Tibial artery (tissue), 4 donors: ENCODE measurements at regions of chr17 and their contacts with region 1.

Region 1: DNA sequence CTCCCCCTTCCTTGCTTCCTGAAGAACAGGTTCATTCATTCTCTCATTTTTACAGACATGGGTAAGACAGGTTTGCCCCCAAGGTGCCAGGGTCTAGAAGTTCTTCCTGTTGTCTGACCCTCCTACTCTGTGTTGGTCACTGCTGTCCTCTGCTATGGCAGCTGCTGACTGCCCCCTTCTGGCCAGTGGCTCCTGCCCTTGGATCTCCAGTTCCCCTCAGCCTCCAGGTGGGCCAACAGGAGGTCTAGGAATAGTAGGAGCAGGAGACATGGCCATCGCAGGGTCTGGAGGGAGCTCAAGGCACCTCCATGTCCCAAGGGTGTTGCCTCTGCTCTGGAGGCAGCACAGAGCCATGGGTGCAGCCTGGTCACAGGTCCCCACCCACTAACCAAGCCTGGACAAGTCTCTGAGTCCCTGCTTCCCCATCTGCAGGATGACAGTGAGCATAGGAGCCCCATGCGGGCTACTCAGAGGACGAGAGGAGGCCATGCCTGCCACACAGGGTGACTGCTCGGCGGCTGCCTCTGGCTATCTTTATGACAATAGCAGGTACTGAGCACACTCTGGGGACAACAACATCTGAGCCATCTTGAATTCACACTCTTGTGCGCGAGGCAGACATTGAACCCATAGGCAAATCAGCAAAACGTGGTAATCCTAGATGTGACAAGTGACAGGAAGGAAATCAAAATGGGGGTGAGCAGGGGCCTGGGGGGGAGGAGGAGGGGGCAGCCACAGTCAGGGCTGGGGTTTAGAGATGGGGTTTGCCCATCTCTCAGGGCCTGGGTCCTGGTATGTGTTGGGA is 27.0 kb upstream of the NXPH3 start:
- DNase-seq: no peak
- H3K4me3 ChIP-seq: no peak overlapping the region
- H3K27ac ChIP-seq: no peak overlapping the region
- H3K4me1 ChIP-seq: peaks cover 0 to 14% (median 3%) of the 10 kb centered on the region in 4 donors
- H3K27me3 ChIP-seq: peaks cover 0 to 34% of the 10 kb centered on the region in 2 donors
- CTCF ChIP-seq: peak; percentile 35

Region 2: DNA sequence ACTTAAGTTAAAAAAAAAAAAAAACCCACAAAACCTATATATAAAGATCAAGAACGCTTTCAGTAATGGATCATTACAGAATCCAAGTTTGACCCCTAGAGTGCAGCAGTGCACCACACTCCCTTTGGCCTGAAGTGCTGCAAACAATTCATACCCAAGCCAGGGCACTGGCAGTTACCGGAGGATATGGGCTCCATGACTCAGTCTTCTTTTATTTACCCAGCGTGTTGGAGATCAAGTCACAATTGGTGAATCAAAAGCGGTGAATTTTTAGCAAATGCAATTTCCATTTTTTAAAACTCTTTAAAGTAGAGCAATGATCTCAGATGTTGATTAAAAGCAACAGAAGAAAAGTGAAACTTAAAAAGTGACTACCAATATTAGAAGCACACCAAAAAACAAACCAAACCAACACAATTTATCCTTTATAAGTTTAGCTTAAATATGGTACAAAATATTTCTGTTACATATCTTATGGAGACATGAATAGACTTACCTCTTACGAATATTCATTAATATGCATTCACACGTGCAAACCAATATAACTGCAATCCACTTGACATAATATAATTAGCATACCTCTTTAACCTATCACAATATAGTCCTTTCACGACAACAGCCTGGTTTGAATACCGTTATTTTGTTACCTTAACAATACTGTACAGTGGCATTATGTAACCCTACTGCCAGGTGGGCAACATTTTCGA is 233.0 kb before region 1 on chr17:
- intact Hi-C with region 1: loop called (anchors 10 kb)
- DNase-seq: peak; percentile 81
- H3K4me3 ChIP-seq: no peak overlapping the region
- H3K27ac ChIP-seq: no peak overlapping the region
- H3K4me1 ChIP-seq: peaks cover 0 to 14% (median 6%) of the 10 kb centered on the region in 4 donors
- H3K27me3 ChIP-seq: no peaks in the 10 kb centered on the region
- CTCF ChIP-seq: peak; percentile 80 to 81

Region 3: DNA sequence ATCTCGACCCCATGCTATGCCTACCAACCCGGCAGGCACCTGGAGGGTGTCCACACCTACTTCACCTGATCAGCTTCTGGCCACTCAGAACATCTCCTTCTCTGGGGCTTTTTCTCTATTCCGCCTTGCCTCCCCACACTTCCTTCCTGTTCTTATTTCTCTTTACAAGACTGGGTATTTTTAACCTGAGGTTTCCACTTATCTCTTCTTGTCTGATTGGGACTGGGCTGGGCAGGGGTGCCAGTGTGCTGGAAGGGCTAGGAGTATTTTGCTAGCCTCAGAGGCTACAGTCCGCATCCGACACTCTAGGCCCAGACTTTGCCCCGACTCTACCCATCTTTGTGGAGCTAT is 160.4 kb before region 1 on chr17:
- intact Hi-C with region 1: no loop called
- DNase-seq: no peak
- H3K4me3 ChIP-seq: no peak overlapping the region
- H3K27ac ChIP-seq: no peak overlapping the region
- H3K4me1 ChIP-seq: peaks cover 0 to 19% (median 0%) of the 10 kb centered on the region in 4 donors
- H3K27me3 ChIP-seq: peaks cover 0 to 25% of the 10 kb centered on the region in 2 donors
- CTCF ChIP-seq: no peak

Region 4: DNA sequence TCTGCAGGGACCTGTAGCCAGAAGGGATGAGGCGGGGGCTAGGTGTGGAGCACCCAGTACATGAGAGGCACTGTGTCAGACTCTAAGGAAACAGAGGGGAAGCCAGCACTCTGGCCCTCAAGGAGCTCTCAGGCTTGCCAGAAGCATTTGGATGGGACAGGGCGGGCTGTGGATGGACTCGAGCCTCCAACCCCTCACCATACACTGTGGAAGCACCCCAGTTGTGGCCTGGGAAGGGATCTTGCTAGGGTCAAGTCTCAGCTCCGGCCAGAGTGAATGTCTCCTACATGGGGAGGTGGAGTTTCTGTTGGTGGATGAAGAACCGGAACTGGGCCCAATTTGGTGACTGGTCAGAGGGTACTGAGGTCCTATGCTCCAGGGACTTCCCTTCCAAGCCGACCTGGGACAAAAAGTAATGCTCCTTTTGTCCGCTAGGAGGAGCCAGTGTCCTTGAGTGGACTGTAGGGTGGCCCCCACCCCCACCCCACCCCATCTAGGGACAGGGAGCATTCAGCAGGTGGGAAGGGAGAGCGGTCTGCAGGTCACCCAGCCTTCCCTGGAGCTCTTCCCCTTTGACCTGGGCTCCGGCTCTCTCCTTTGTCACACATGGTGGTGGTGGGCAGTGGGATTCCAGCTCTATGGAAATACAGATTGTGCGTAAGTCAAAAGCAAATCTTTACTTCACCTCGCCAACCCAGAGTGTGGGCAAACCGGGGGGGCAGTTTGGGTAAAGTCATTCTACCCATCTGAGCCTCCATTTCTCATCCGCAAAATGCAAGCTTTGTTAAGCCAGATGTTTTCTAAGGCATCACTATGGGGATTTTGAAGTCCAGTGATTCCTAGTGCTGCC is 113.7 kb before region 1 on chr17:
- intact Hi-C with region 1: loop called (anchors 5 kb)
- DNase-seq: peak in 1 of 2 donors; percentile 59
- H3K4me3 ChIP-seq: no peak overlapping the region
- H3K27ac ChIP-seq: no peak overlapping the region
- H3K4me1 ChIP-seq: peaks cover 0 to 7% (median 0%) of the 10 kb centered on the region in 4 donors
- H3K27me3 ChIP-seq: peaks cover 0 to 30% of the 10 kb centered on the region in 2 donors
- CTCF ChIP-seq: peak; percentile 53 to 71

Region 5: GRCh38 chr17:50406578-50406977 is 857.9 kb after region 1 on chr17:
- intact Hi-C with region 1: no loop called
- DNase-seq: no peak
- H3K4me3 ChIP-seq: no peak overlapping the region
- H3K27ac ChIP-seq: no peak overlapping the region
- H3K4me1 ChIP-seq: no peaks in the 10 kb centered on the region
- H3K27me3 ChIP-seq: peaks cover 0 to 24% of the 10 kb centered on the region in 2 donors
- CTCF ChIP-seq: no peak